ENCODE measurements at regions of chr6 and their contacts with region 1.

Region 1: DNA sequence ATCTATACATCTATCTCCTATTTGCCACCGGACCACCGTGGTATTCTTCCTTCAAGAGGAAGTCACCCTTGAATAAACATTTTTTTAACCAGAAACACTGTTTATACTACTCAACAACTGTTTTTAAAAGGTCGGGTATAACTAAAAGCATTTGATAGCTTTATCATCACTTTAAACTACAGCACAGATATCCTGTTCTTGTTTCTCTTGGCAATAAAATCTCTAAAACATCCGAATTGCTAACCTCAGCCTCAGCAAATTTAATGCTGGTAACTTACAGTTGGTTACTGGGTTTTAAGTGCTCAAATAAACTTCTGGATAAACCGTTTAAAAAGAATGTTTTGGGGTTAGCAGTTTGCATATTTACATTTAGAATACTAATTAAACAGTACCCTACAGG is 20.4 kb downstream of the ZUP1 start:
- DNase-seq: no peak
- H3K4me3 Mint-ChIP-seq: no peak overlapping the region
- H3K27ac Mint-ChIP-seq: no peak overlapping the region
- H3K4me1 Mint-ChIP-seq: peaks cover 27% of the 10 kb centered on the region
- H3K27me3 Mint-ChIP-seq: no peaks in the 10 kb centered on the region

Region 2: DNA sequence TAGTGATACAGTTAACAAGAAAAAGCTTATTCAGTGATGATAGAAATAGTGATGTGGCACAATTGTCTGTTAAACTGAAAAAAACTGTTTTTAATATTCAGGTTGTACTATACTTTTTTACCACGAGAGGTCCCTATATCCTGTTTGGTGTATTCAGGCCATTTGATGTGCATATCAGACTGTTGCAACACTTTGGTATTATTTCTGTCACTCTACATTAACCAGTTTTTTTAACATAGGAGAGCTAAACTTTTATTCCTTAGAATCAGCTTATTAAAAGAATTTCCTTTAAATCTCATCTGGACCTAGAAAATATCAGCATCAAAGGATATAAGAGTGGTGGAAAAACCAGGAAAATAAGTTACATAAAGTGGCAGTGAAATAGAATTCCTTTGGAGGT is 431.1 kb before region 1 on chr6:
- intact Hi-C with region 1: loop called (anchors 1 kb)
- DNase-seq: no peak
- H3K4me3 Mint-ChIP-seq: no peak overlapping the region
- H3K27ac Mint-ChIP-seq: no peak overlapping the region
- H3K4me1 Mint-ChIP-seq: no peaks in the 10 kb centered on the region
- H3K27me3 Mint-ChIP-seq: no peaks in the 10 kb centered on the region

Region 3: DNA sequence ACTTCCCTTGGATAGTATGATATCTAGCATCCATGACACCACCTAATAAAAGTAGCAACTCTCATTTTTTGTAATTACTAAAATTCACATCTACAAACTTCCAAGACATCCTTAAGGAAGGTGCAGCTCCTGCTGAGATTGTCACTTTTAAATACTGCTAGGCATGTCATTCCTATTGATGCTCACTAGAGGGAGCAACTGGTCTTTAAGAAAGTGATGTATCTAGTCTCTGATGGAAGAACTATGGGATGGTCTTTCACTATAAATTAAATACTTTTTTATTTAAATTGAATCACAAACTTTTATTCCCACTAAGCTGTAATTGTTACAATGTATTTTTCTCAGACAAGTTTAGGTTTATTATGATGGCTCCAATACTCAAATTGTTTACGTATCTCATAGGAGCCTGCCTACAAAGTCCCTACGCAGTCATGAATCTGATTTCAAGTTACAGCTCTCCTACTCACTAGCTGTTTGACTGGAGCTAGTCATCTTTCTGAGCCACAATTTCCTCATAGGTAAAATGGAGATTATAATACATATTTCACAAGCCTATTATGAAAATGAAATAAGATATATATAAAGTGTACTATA is 360.4 kb before region 1 on chr6:
- intact Hi-C with region 1: loop called (anchors 2 kb)
- DNase-seq: no peak
- H3K4me3 Mint-ChIP-seq: no peak overlapping the region
- H3K27ac Mint-ChIP-seq: no peak overlapping the region
- H3K4me1 Mint-ChIP-seq: no peaks in the 10 kb centered on the region
- H3K27me3 Mint-ChIP-seq: peaks cover 9% of the 10 kb centered on the region

Region 4: DNA sequence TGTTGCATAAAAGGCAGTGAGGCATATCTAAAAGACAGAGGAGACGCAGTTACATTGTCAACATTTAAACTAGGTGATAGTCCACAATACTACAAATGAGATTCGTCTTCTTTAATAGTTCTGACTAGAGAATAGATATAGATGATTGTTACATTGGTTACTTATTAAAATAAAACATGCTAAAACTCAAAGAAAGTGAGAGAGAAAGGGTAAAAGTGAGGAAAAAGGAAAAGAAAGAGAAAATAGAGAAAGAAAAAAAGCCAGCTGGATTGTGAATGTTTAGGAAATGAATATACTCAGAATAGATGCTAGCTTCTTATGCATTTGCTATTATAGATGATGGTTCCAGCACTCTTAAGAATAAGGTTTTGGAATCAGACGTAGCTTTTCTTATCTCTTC is 145.1 kb after region 1 on chr6:
- intact Hi-C with region 1: no loop called
- DNase-seq: no peak
- H3K4me3 Mint-ChIP-seq: no peak overlapping the region
- H3K27ac Mint-ChIP-seq: no peak overlapping the region
- H3K4me1 Mint-ChIP-seq: peaks cover 8% of the 10 kb centered on the region
- H3K27me3 Mint-ChIP-seq: peaks cover 4% of the 10 kb centered on the region

Measured in activated T-helper 1 cell treated with anti-CD3 and anti-CD28 coated beads, Interleukin-12 subunit alpha, Interleukin-12 subunit beta, Interleukin-2, Interleukin-4 antibody, amounts not matched to agents 30 ng/mL and 10 ng/mL and 1 ng/mL, durations not matched to agents 14 hours and 24 hours and 36 hours (primary cell).